Transverse colon (tissue), 4 donors: ENCODE measurements at regions of chr7 and their contacts with region 1.

Region 1: GRCh38 chr7:102983602-102984001 is 70.8 kb downstream of the LRRC17 start:
- DNase-seq: no peak
- H3K4me3 ChIP-seq: no peak overlapping the region
- H3K27ac ChIP-seq: no peak overlapping the region
- H3K4me1 ChIP-seq: no peaks in the 10 kb centered on the region
- H3K27me3 ChIP-seq: no peaks in the 10 kb centered on the region
- CTCF ChIP-seq: no peak
- EP300 ChIP-seq: no peak
- POLR2A ChIP-seq: no peak

Region 2: GRCh38 chr7:101112233-101112632 is 1871.4 kb before region 1 on chr7:
- in situ Hi-C with region 1: no loop called
- intact Hi-C with region 1: no loop called
- DNase-seq: no peak
- H3K4me3 ChIP-seq: no peak overlapping the region
- H3K27ac ChIP-seq: peak overlapping the region; percentile 8 to 37 (median 28)
- H3K4me1 ChIP-seq: peaks cover 0 to 5% (median 0%) of the 10 kb centered on the region in 4 donors
- H3K27me3 ChIP-seq: no peaks in the 10 kb centered on the region
- CTCF ChIP-seq: no peak
- EP300 ChIP-seq: peak; percentile 62
- POLR2A ChIP-seq: no peak

Region 3: GRCh38 chr7:102953406-102953805 is 30.2 kb before region 1 on chr7:
- in situ Hi-C with region 1: no loop called
- intact Hi-C with region 1: loop called (anchors 2 kb)
- DNase-seq: no peak
- H3K4me3 ChIP-seq: no peak overlapping the region
- H3K27ac ChIP-seq: no peak overlapping the region
- H3K4me1 ChIP-seq: no peaks in the 10 kb centered on the region
- H3K27me3 ChIP-seq: no peaks in the 10 kb centered on the region
- CTCF ChIP-seq: no peak
- EP300 ChIP-seq: no peak
- POLR2A ChIP-seq: no peak